Aorta (tissue), 5 donors: ENCODE measurements at regions of chr9 and their contacts with region 1.

Region 1: DNA sequence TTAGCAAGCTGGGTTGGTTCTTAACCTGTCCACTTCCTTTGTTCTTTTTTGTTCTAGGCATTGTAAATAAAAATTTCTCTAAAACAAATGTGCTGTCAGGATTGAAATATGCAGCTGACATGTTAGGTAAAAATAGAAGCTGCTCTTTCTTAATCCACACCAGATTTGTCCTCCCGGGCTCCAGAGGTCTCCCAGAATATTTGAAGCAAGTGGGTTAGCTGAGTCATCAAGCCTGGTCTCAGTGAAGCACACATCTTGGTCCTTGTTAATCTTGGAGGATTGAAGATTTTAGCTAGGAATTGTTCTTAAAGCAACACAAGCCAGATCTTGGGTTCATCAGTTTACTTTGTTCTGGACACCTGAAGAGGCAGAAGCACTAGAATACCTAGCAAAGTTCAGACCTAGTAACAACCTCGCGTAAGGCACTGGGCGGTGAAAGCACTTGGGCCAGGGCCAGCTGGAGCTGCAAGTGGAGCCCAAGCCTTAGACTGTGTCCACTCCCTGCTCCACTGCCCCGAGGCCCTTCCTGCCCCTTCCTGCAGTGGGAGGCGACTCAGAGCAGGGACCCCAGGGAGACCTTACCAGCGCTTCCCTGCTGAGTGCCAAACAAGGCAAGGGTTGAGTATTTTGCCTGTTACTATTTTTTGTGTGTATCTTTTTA is 36.5 kb downstream of the HABP4 start:
- DNase-seq: peak in 1 of 2 donors; percentile 84
- ATAC-seq: peak; percentile 88
- H3K4me3 ChIP-seq: no peak overlapping the region
- H3K27ac ChIP-seq: peak overlapping the region; percentile 48 to 91
- H3K4me1 ChIP-seq: peaks cover 0 to 10% of the 10 kb centered on the region in 2 donors
- H3K27me3 ChIP-seq: no peaks in the 10 kb centered on the region

Region 2: DNA sequence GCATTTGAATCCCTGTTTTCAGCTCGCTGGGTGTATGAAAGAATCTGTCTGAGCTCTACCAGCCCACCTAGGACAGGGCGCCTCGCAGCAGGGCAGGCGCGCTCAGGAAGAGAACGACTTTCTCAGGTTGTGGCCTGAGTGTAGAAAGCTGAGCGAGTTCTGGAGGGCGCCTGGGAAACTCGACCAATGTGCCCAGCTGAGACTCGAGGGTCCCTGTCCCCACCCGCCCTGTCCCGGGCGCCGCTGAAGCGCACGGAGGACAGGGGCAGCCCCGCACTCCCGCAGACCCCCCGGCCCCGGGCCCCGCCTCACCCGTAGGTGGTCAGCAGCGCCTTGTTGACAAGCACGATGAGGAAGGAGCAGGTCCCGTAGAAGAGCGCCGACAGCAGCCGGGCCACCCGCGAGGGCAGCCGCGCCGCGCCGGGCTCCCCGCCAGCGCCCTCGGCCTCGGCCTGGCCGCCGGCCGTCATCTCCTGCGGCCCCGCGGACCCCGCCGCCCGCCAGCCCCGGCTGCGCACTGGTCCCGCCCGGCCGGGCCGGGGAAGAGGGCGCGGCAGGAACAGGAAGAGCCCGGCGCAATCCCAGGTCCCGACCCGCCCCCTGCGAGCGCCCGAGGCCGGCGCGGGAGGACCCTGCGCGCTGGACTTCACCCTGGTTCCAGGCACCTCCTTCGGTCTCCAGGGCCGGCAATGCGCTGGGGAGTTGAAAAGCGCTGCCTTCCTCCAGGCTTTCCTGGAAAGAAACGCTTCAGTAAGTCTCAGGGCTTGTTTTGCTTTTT is 103.1 kb before region 1 on chr9 and contains the start of gene SLC35D2:
- intact Hi-C with region 1: no loop called
- DNase-seq: peak; percentile 77 to 90
- ATAC-seq: peak; percentile 87
- H3K4me3 ChIP-seq: peak within 1 kb of the TSS; percentile 90 to 99
- H3K27ac ChIP-seq: peak within 1 kb of the TSS; percentile 47 to 72
- H3K4me1 ChIP-seq: peaks cover 0 to 2% of the 10 kb centered on the region in 2 donors
- H3K27me3 ChIP-seq: no peaks in the 10 kb centered on the region
- total RNA-seq, gene SLC35D2: 18.0 to 22.0 TPM

Region 3: DNA sequence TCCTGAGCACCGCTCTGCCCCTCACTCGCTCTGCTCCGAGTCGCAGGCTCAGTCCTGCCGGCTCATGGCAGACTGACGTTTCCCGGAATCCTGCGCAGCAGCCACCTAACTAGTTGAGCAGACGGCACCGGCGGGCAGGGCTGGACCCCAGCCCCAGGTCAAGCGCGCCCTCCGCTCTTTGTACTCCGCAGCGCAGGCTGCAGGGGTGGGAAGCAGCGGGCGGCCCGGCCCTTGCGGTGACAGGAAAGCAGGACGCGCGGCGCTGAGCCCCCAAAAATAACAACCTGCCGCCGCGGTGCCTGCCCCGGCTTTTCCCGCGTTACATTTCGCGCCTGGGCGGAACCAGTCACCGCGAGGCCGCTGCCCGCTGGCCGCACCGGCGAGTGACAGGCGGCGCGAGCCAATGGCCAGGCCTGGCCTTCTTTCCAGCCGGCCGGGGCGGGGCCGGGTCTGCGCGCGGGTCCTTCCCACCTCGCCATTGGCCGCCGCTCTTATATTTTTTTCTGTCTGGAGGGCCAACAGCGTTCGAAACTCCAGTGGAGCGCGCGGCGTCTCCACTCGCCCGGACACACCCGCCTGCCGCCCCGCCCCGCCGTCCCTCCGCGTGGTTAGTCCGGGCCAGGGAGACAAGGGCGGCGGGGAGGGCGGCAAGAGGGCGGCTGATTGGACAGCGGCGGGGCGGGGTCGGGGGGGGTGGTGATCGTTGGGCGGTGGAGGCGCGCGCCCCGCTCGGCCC is 68.3 kb before region 1 on chr9 and contains the start of gene ZNF367:
- intact Hi-C with region 1: loop called in 1 of 2 experiments (anchors 2 kb)
- DNase-seq: peak; percentile 99
- ATAC-seq: peak; percentile 96
- H3K4me3 ChIP-seq: peak within 1 kb of the TSS; percentile 71 to 84
- H3K27ac ChIP-seq: peak within 1 kb of the TSS; percentile 68 to 98
- H3K4me1 ChIP-seq: peaks cover 0 to 3% of the 10 kb centered on the region in 2 donors
- H3K27me3 ChIP-seq: no peaks in the 10 kb centered on the region
- total RNA-seq, gene ZNF367: 1.3 to 1.8 TPM

Region 4: DNA sequence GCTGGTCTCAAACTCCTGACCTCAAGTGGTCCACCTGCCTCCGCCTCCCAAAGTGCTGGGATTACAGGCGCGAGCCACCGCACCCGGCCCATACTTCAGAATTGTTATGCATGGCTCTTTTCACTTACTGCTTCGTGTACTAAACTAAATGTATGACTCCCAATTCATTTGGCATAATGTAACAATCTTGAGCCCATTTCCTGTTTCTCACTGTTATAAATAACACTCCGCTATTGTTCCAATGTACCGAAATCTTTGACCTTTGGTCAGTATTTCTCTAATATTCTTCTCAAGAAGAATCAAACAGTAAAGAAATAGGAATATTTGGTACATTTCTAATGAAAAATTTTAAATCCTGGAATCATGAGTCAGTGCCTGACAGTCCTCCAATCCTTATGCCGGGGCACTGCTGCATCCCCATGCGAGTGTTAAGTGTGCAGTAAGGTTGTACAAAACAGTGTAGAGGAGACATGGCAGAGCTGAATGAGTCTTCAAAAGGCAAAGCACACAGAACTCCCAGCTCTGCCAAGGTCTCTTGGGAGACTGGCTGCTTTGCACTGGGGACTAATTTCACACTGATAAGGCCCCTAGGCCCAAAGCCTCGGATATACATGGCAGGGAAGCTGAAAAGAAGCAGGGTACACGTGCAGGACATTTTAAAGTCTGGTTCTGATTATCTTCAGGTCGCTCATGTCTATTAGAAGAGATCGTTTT is 21.9 kb after region 1 on chr9:
- intact Hi-C with region 1: loop called in 1 of 2 experiments (anchors 2 kb)
- DNase-seq: no peak
- ATAC-seq: peak; percentile 24
- H3K4me3 ChIP-seq: no peak overlapping the region
- H3K27ac ChIP-seq: peak overlapping the region; percentile 36 to 64
- H3K4me1 ChIP-seq: peaks cover 0 to 10% of the 10 kb centered on the region in 2 donors
- H3K27me3 ChIP-seq: no peaks in the 10 kb centered on the region

Region 5: DNA sequence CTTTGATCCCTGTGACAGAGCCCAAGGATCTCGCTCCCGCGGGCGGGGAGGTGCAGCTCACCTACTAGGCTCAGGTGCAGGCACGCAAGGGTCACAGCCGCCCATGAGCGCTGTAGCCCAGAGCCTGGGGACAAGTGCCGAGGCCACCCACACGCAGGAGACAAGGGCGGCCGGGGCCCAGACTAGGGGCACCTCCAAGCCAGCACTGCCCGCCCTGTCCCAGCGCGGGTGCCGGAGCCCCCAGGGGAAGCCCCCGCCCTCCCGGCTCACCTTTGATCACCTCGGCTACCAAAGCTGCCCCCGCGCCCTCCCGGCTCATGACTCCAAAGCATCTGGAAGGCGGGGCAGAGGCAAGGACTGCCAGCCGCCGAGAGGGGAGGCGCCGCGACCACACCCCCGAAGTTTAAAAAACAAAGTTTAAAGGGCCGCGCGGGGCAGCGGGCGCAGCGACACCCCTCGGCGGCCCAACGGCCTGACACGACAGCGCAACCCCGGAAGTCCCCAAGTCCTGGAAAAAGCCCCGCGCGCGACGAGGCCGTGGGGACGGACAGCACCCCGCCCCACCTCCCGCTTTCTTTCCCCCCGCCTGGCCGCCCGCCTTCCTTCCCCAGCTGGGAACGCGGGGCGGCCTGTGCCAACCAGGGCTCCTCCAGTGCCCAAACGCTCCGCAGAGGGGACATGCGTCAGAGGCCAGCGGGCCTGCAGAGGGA is 80.2 kb after region 1 on chr9:
- intact Hi-C with region 1: loop called in 1 of 2 experiments (anchors 10 kb)
- DNase-seq: peak; percentile 90 to 93
- ATAC-seq: peak; percentile 93
- H3K4me3 ChIP-seq: peak overlapping the region; percentile 90 to 92
- H3K27ac ChIP-seq: peak overlapping the region; percentile 84 to 93
- H3K4me1 ChIP-seq: peaks cover 0 to 3% of the 10 kb centered on the region in 2 donors
- H3K27me3 ChIP-seq: no peaks in the 10 kb centered on the region

Region 6: GRCh38 chr9:96619491-96620154 is 133.1 kb after region 1 on chr9 and contains the start of gene CDC14B:
- intact Hi-C with region 1: loop called in 1 of 2 experiments (anchors 10 kb)
- DNase-seq: peak; percentile 93 to 94
- ATAC-seq: peak; percentile 71
- H3K4me3 ChIP-seq: peak within 1 kb of the TSS; percentile 72 to 89
- H3K27ac ChIP-seq: peak within 1 kb of the TSS; percentile 38 to 97
- H3K4me1 ChIP-seq: no peaks in the 10 kb centered on the region
- H3K27me3 ChIP-seq: no peaks in the 10 kb centered on the region
- total RNA-seq, gene CDC14B: 27.9 to 37.9 TPM

Region 7: DNA sequence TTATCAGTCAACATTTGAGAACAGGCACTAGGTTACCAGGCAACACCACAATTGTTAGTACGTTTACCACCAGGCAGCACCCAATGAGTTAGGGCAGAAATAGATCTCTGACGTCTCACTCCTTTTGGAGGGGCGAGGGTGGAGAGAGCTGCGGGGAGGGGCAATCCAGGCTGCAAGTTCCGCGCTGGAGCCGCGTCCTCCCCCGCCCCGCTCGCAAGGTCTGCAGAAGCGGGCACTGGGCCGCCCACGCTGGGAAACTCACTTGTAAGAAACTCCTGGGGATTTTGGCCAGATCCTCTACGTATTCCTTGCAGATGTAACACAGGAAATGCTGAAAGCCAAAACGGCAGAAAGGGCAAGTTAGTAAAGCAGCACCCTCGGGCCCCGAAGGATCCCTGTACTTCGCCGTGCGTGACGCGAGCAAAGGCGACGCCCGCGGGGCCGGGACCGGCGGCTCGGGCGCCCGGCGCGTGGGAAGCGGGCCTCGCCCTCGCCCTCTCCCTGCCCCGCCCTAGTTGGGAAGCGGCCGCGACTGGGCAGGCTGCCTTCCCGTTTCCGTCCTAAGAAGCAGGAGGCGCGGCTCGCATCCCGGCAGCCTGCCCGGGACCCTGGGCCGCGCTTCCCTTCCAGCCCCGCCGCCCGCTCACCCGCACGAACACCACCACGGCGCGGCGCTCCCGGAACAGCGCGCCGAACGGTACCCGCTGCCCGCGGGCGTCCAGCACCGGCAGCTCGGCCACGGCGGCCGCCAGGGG is 168.1 kb after region 1 on chr9:
- intact Hi-C with region 1: loop called in 1 of 2 experiments (anchors 10 kb)
- DNase-seq: peak; percentile 92 to 96
- ATAC-seq: peak; percentile 91
- H3K4me3 ChIP-seq: peak overlapping the region; percentile 65 to 71
- H3K27ac ChIP-seq: peak overlapping the region; percentile 93 to 99
- H3K4me1 ChIP-seq: no peaks in the 10 kb centered on the region
- H3K27me3 ChIP-seq: no peaks in the 10 kb centered on the region